ENCODE measurements at regions of chr22 and their contacts with region 1.

Region 1: GRCh38 chr22:28600546-28601143 is 79.0 kb downstream of the TTC28 start:
- DNase-seq: peak; percentile 56
- H3K4me3 Mint-ChIP-seq: no peak overlapping the region
- H3K27ac Mint-ChIP-seq: no peak overlapping the region
- H3K4me1 Mint-ChIP-seq: no peaks in the 10 kb centered on the region
- H3K27me3 Mint-ChIP-seq: peaks cover 21% of the 10 kb centered on the region
- CTCF ChIP-seq: peak; percentile 41

Region 2: DNA sequence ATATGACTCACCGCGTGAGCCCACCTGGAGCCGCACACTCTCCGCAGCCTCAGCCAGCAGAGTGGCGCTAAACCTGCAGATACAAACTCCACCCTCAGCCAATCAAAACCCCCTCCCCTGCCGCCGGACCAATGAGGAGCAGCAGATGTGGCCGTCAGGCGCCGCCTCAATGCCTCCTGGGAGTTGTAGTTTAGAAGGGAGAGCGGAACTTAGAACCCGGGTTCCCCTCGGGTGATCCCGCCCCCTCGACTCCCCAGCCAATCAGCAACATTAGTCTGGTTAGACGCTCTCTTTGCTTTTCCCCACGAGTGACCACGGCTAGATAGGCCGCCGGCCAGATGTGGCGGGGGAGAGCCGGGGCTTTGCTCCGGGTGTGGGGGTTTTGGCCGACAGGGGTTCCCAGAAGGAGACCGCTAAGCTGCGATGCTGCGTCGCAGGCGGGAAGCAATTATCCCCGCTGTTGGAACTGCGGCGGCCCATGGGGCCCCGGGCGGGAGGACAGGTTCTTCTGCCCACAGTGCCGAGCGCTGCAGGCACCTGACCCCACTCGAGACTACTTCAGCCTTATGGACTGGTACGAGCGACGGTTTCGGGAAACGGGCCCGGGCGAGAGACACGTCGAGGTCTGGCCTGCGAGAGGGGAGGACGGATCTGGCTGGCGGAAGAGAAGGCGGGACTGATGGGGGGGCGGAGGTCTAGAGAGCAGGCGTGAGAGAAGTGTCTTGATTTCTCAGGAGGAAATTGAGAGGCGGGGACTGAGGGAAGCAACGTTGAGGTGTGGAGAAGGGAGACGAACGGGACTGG is 141.3 kb after region 1 on chr22 and contains the starts of genes CHEK2 and HSCB:
- CTCF ChIA-PET with region 1: no interaction called
- POLR2A ChIA-PET with region 1: no interaction called
- intact Hi-C with region 1: loop called (anchors 1 kb)
- DNase-seq: peak; percentile 99
- H3K4me3 Mint-ChIP-seq: peak within 1 kb of the TSS; percentile 93
- H3K27ac Mint-ChIP-seq: peak within 1 kb of the TSS; percentile 92
- H3K4me1 Mint-ChIP-seq: peaks cover 15% of the 10 kb centered on the region
- H3K27me3 Mint-ChIP-seq: no peaks in the 10 kb centered on the region
- CTCF ChIP-seq: no peak
- total RNA-seq, gene CHEK2: 17.6 and 18.8 TPM in 2 replicates
- total RNA-seq, gene HSCB: 19.3 and 24.7 TPM in 2 replicates

Region 3: GRCh38 chr22:28772633-28773460 is 172.2 kb after region 1 on chr22 and contains the start of gene CCDC117:
- CTCF ChIA-PET with region 1: no interaction called
- POLR2A ChIA-PET with region 1: no interaction called
- intact Hi-C with region 1: loop called (anchors 2 kb)
- DNase-seq: peak; percentile 93
- H3K4me3 Mint-ChIP-seq: peak within 1 kb of the TSS; percentile 88
- H3K27ac Mint-ChIP-seq: peak within 1 kb of the TSS; percentile 87
- H3K4me1 Mint-ChIP-seq: peaks cover 10% of the 10 kb centered on the region
- H3K27me3 Mint-ChIP-seq: no peaks in the 10 kb centered on the region
- CTCF ChIP-seq: no peak
- total RNA-seq, gene CCDC117: 12.1 and 14.6 TPM in 2 replicates

Region 4: DNA sequence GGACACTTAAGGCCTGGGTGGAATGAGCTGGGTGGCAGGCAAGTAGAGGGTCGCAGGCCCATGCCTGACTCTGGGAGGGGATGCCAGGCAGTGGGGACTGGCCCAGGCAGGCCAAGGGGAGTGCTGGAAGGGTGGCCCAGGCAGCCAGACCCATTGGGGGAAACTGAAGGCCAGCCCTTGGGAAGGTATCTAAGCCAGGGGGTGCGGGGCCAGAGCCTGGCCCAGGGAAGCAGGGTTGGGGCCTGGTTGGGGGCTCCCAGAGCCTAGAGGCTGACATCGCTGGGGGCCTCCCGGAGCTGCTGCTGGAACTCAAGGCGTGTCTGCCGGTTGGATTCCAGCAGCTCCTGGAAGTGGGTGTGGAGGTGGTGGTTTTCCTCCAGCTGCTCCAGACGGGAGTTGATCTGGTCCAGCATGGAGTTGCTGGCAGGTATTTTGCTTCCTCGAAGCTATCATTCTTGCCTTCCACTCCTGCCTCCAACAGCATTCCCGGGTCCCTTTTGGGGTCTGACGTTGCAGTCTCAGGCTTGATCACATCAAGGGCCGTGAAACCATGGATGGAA is 235.1 kb after region 1 on chr22:
- CTCF ChIA-PET with region 1: interaction called, 131 read pairs
- POLR2A ChIA-PET with region 1: interaction called, 4 read pairs
- intact Hi-C with region 1: no loop called
- DNase-seq: no peak
- H3K4me3 Mint-ChIP-seq: no peak overlapping the region
- H3K27ac Mint-ChIP-seq: no peak overlapping the region
- H3K4me1 Mint-ChIP-seq: no peaks in the 10 kb centered on the region
- H3K27me3 Mint-ChIP-seq: no peaks in the 10 kb centered on the region
- CTCF ChIP-seq: no peak

Measured in MCF 10A (cell line).